ENCODE measurements at regions of chr6 and their contacts with region 1.

Region 1: GRCh38 chr6:73675466-73676098 is 20.4 kb upstream of the CD109 start:
- DNase-seq: peak; percentile 53 to 77
- ATAC-seq: peak; percentile 99 to 100
- H3K4me3 ChIP-seq: no peak overlapping the region
- H3K27ac ChIP-seq: no peak overlapping the region; a peak in 1 of 6 replicates
- H3K4me1 ChIP-seq: 0 out of 3 replicates have a peak, but pooled peaks cover 3% of the 10 kb centered on the region
- CTCF ChIP-seq: peak; percentile 84
- EP300 ChIP-seq: no peak
- POLR2A ChIP-seq: no peak
- RAD21 ChIP-seq: peak; percentile 82 to 92

Region 2: DNA sequence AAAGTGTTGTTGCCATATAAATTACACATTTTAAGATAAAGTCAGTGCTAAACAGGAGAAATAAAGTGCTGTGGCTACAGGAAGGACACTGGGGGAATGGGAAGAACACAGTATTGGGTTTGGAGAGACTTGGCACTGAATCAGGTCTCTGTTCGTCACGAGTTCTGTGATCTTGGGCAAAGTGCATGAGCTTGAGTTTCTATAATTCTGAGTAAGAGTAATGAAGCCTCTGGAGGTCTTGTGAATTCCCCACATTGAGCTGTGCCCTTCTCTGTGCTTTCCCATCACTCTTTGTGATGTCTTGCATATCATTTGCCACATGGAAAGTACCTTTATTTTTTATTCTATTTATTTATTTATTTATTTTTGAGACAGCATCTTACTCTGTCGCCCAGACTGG is 137.9 kb before region 1 on chr6:
- CTCF ChIA-PET with region 1: no interaction called
- POLR2A ChIA-PET with region 1: no interaction called
- DNase-seq: no peak
- ATAC-seq: no peak
- H3K4me3 ChIP-seq: no peak overlapping the region
- H3K27ac ChIP-seq: no peak overlapping the region
- H3K4me1 ChIP-seq: no peaks in the 10 kb centered on the region
- CTCF ChIP-seq: no peak
- EP300 ChIP-seq: no peak
- POLR2A ChIP-seq: no peak
- RAD21 ChIP-seq: no peak

Region 3: DNA sequence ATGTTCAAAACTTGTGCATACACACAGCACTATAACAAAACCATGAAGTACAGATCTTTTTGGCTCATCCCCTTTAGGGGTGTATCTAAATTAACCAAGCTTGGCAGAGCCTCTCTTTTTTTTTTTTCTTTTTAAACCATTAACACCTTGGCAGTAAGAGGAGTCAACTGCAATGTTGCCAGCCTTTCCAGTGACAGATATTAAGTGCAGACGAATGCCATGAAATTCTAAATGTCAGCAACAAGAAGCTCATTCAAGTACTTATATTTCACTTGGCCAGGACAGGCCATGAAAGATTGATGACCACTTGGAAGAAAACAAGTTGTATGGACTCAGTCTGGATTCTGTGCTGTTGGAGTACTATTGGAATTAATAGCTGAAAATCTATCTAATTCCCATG is 71.6 kb before region 1 on chr6:
- CTCF ChIA-PET with region 1: no interaction called
- POLR2A ChIA-PET with region 1: no interaction called
- DNase-seq: no peak
- ATAC-seq: no peak
- H3K4me3 ChIP-seq: no peak overlapping the region
- H3K27ac ChIP-seq: 0 out of 6 replicates have a peak overlapping the region, but pooled peaks of 1 of the 2 experiments have one; percentile 11
- H3K4me1 ChIP-seq: 0 out of 3 replicates have a peak, but pooled peaks cover 3% of the 10 kb centered on the region
- CTCF ChIP-seq: no peak
- EP300 ChIP-seq: no peak
- POLR2A ChIP-seq: no peak
- RAD21 ChIP-seq: no peak

Region 4: GRCh38 chr6:73695619-73696421 is 20.2 kb after region 1 on chr6 and contains the start of gene CD109:
- CTCF ChIA-PET with region 1: interaction called, 28 read pairs
- POLR2A ChIA-PET with region 1: no interaction called
- DNase-seq: peak; percentile 65 to 89
- ATAC-seq: peak; percentile 89 to 92
- H3K4me3 ChIP-seq: peak within 1 kb of the TSS; percentile 68
- H3K27ac ChIP-seq: peak within 1 kb of the TSS; percentile 95 to 97
- H3K4me1 ChIP-seq: peaks cover 28% of the 10 kb centered on the region
- CTCF ChIP-seq: no peak
- EP300 ChIP-seq: no peak
- POLR2A ChIP-seq: no peak
- RAD21 ChIP-seq: 0 out of 5 replicates have a peak, but pooled peaks of 1 of the 2 experiments have one; percentile 9
- polyA plus RNA-seq, gene CD109: 47.1 and 56.7 TPM in 2 replicates

Region 5: GRCh38 chr6:73739096-73739495 is 63.5 kb after region 1 on chr6:
- CTCF ChIA-PET with region 1: interaction called, 114 read pairs
- POLR2A ChIA-PET with region 1: no interaction called
- DNase-seq: peak; percentile 3 to 56
- ATAC-seq: peak; percentile 56 to 72; a peak in 4 of 6 replicates
- H3K4me3 ChIP-seq: no peak overlapping the region
- H3K27ac ChIP-seq: no peak overlapping the region
- H3K4me1 ChIP-seq: no peaks in the 10 kb centered on the region
- CTCF ChIP-seq: peak; percentile 75
- EP300 ChIP-seq: no peak
- POLR2A ChIP-seq: no peak
- RAD21 ChIP-seq: peak; percentile 75 to 78

Measured in A549 (cell line).